OCI-LY7 (cell line): ENCODE measurements at regions of chr12 and their contacts with region 1.

Region 1: GRCh38 chr12:68317047-68317667 is 15.0 kb downstream of the MDM1 start:
- DNase-seq: peak; percentile 72
- H3K4me3 ChIP-seq: no peak overlapping the region
- H3K27ac ChIP-seq: no peak overlapping the region
- H3K4me1 ChIP-seq: no peaks in the 10 kb centered on the region
- CTCF ChIP-seq: peak; percentile 95

Region 2: DNA sequence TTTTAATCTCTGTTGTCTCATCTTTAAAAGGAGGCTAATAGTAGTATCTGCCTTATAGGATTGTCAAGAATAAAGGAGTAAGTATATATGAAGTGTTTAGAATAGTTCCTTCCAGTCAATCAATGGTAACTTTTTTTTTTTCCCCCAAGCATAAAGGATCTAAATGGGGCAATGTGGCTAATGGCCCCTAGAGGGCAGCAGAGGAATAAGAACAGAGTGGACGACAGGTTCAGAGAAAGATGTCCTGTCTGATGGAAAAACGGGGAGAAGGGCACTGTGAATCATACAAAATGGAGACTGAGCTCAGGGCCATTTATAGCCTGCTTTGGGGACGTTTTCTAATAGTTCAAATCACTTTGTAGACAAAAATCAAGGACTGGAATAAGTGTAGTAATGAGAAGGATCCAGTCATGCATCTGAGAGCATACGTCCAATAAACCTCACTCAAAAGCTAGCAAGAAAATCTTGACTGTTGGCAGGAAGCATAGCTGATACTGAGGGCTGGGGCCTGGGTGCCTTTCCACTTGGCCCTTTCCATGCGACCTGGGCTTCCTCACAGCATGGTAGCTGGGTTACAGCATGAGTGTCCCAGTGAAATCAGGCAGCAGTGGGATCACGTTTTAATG is 276.6 kb before region 1 on chr12:
- CTCF ChIA-PET with region 1: no interaction called
- POLR2A ChIA-PET with region 1: no interaction called
- intact Hi-C with region 1: loop called (anchors 1 kb)
- DNase-seq: peak; percentile 68
- H3K4me3 ChIP-seq: no peak overlapping the region
- H3K27ac ChIP-seq: no peak overlapping the region
- H3K4me1 ChIP-seq: no peaks in the 10 kb centered on the region
- CTCF ChIP-seq: peak; percentile 99

Region 3: GRCh38 chr12:68223083-68223747 is 93.9 kb before region 1 on chr12:
- CTCF ChIA-PET with region 1: interaction called, 3 read pairs
- POLR2A ChIA-PET with region 1: interaction called, 5 read pairs
- intact Hi-C with region 1: loop called (anchors 1 kb)
- DNase-seq: peak; percentile 78
- H3K4me3 ChIP-seq: no peak overlapping the region
- H3K27ac ChIP-seq: no peak overlapping the region
- H3K4me1 ChIP-seq: peaks cover 3% of the 10 kb centered on the region
- CTCF ChIP-seq: peak; percentile 96

Region 4: DNA sequence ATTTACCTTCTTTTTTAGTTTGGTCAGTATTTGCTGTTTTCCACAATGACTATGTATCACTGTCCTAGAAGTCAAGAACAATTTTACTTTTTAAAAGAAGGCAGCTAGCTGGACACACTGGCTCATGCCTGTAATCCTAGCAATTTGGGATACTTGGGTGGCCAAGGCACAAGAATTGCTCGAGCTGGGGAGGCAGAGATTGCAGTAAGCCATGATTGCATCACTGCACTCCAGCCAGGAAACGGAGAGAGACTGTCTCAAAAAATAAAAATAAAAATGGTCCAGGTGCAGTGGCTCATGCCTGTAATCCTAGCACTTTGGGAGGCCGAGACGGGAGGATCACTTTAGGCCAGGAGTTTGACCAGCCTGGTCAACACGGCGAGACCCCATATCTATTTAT is 13.3 kb before region 1 on chr12:
- CTCF ChIA-PET with region 1: no interaction called
- POLR2A ChIA-PET with region 1: no interaction called
- intact Hi-C with region 1: no loop called
- DNase-seq: no peak
- H3K4me3 ChIP-seq: no peak overlapping the region
- H3K27ac ChIP-seq: no peak overlapping the region
- H3K4me1 ChIP-seq: peaks cover 6% of the 10 kb centered on the region
- CTCF ChIP-seq: no peak

Region 5: GRCh38 chr12:68331869-68332727 is 14.9 kb after region 1 on chr12 and contains the start of gene MDM1:
- CTCF ChIA-PET with region 1: interaction called, 5 read pairs
- POLR2A ChIA-PET with region 1: interaction called, 11 read pairs
- intact Hi-C with region 1: no loop called
- DNase-seq: peak; percentile 99
- H3K4me3 ChIP-seq: peak within 1 kb of the TSS; percentile 84
- H3K27ac ChIP-seq: peak within 1 kb of the TSS; percentile 52
- H3K4me1 ChIP-seq: peaks cover 24% of the 10 kb centered on the region
- CTCF ChIP-seq: no peak
- total RNA-seq, gene MDM1: 30.8 and 37.4 TPM in 2 replicates

Region 6: DNA sequence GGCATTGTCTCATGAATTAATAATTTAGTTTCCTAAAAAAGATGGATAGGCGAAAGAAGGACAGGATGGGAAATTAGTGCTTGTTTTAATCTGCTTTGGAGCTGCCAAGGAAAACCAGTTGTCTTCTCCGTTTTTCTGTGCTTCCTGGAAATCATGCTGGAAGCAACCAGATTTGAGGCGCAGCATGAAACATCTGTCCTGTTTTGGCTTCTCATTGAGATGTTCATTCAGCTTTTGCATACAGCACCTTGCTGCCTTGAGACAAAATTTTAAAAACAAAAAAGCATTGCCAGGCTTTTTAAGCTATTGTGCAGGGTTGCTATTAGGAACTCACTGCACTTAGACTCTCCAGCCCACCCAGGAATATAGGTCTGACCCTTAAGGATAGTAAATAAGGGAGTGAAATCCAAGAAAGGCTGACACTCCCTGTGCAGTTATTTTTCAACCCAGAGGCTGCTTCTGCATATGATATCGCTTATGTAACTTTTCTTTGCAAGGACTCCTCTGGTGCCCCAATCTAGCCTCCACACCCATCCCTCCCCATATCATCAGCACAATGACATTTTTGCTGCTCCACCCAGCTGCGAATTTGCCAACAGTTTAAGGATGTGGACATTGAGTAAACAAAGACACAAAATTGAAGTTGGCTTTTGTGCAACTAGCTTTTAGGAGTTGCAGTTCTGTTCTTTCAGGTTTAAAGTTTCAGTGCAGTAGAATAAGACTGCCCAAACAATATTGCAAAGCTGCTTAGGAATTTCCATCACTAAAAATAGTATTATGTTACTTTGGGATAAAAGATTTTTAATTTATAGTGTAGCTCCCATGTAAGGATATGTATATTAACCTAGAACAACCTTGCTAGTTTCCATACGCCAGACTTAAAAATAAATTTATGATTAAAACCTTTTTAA is 62.0 kb after region 1 on chr12:
- CTCF ChIA-PET with region 1: no interaction called
- POLR2A ChIA-PET with region 1: no interaction called
- intact Hi-C with region 1: no loop called
- DNase-seq: no peak
- H3K4me3 ChIP-seq: no peak overlapping the region
- H3K27ac ChIP-seq: no peak overlapping the region
- H3K4me1 ChIP-seq: no peaks in the 10 kb centered on the region
- CTCF ChIP-seq: no peak

Region 7: DNA sequence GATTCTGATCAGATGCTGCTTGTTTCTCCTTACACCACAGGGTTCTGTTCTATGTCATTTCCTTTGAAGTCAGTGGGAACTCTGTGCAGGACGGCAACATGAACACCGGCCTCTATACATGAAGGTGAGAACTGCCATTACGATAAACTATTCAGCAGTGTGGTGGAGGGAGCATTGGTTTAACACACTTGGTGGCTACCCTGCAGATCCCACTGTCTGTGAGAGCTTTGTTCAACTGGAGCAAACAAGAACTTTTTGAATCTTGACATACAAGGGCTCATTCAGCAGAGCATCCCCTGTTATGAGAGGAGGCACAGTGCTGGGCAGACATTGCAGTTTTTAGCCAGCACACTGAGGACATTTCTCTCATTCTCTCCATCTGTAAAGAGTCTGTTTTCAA is 1142.3 kb after region 1 on chr12:
- CTCF ChIA-PET with region 1: no interaction called
- POLR2A ChIA-PET with region 1: no interaction called
- intact Hi-C with region 1: no loop called
- DNase-seq: no peak
- H3K4me3 ChIP-seq: no peak overlapping the region
- H3K27ac ChIP-seq: no peak overlapping the region
- H3K4me1 ChIP-seq: no peaks in the 10 kb centered on the region
- CTCF ChIP-seq: no peak